ENCODE measurements at regions of chr1 and their contacts with region 1.

Region 1: GRCh38 chr1:152466217-152466616 is 44.4 kb upstream of the LCE5A start:
- DNase-seq: no peak
- H3K4me3 ChIP-seq: no peak overlapping the region
- H3K27ac ChIP-seq: no peak overlapping the region
- H3K4me1 ChIP-seq: no peaks in the 10 kb centered on the region
- H3K27me3 ChIP-seq: peaks cover 14% of the 10 kb centered on the region
- CTCF ChIP-seq: no peak

Region 2: DNA sequence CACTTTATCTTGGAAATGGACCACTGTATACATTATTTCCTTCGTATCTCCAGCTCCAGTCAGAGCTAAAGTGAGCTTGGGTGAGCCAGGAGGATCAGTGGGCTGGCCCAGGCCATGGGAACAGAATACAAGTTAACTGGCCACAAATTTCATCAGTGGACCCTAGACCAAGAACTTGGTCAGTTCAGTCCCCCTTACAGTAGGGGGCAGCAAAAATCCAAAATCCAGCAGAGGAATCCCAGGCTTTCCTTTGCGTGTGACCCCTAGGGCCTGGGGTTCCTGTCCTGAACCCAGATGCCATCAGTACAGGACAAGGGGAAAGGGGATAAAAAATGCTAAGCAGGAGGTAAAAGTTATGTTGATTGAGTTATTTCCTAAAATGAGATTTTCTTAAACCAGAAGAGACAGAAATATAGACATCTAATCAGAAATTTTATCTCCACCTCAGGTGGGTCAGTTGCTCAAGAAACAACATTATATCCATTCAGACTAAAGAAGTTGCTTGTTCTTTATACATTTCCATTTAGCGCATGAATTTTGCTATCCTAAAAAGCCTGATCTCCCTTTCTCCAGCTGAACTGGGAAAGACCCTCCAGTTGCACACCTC is 20.3 kb after region 1 on chr1:
- intact Hi-C with region 1: loop called (anchors 2 kb)
- DNase-seq: no peak
- H3K4me3 ChIP-seq: no peak overlapping the region
- H3K27ac ChIP-seq: no peak overlapping the region
- H3K4me1 ChIP-seq: no peaks in the 10 kb centered on the region
- H3K27me3 ChIP-seq: peaks cover 17% of the 10 kb centered on the region
- CTCF ChIP-seq: peak; percentile 24

Region 3: GRCh38 chr1:152623203-152623844 is 157.1 kb after region 1 on chr1:
- intact Hi-C with region 1: no loop called
- DNase-seq: no peak
- H3K4me3 ChIP-seq: no peak overlapping the region
- H3K27ac ChIP-seq: no peak overlapping the region
- H3K4me1 ChIP-seq: no peaks in the 10 kb centered on the region
- H3K27me3 ChIP-seq: peaks cover 27% of the 10 kb centered on the region
- CTCF ChIP-seq: no peak

Region 4: DNA sequence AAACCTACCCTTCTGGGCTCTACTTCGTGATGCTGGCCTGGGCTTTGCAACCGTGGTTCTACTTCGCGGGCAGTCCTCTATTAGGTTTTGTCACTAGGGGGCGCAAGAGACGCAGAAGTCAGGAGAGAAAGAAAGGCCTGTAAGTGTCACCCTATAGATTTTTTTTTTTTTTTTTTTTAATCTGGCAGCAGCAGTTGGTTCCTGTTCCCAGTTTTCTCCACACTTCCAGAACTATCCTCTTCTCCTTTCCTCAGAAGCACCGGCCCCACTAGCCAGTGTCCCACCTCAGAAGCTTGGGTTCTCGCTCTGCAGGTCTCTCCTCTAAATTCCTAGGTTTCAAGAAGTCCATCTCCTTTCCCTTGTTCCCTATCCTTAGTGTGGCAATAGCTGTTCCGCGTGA is 187.9 kb after region 1 on chr1:
- intact Hi-C with region 1: no loop called
- DNase-seq: no peak
- H3K4me3 ChIP-seq: no peak overlapping the region
- H3K27ac ChIP-seq: no peak overlapping the region
- H3K4me1 ChIP-seq: no peaks in the 10 kb centered on the region
- H3K27me3 ChIP-seq: peaks cover 1% of the 10 kb centered on the region
- CTCF ChIP-seq: peak; percentile 56

Region 5: DNA sequence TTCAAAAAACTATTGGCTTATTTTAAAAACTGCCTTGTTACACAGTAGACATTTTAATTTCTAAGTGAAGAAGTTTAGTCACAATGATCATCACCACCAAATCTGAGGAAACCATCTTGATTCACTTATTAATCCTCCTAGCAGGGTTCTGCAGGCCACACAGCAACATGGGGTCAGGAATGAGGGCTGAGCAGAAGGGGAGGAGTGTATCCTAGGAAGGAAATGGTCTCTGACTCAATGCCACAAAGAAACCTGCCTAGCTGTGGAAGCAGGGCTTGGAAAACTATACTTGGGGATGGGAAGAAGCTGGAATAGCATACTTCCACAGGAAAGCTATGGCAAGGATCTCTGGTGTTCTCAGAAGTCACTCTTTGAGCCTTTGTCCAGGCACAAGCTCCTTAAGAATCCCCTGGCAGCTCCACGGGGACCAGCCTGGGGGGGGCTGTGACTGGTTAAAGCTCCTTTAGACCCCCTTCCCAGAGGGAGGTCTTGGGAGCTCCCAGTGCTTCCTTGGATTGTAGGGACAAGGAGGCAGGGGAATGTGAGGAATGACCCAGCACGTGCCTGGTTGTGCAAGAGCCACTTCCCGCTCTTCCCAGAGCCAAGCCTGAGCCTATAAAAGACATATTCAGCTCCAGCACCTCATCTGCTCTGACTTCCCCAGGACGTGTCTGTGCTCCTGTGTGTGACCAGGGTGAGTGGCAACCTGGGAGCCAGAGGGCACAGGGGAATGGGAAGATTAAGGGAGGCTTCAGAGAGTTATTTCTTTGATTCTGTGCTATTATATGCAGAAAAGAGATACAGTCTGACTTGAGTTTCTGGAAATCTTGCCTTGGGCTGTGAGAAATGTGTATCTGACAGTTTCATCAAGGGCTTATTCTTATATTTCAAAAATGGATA is 231.7 kb after region 1 on chr1 and contains the start of gene LCE2A:
- intact Hi-C with region 1: no loop called
- DNase-seq: no peak
- H3K4me3 ChIP-seq: no peak within 1 kb of the TSS
- H3K27ac ChIP-seq: no peak within 1 kb of the TSS
- H3K4me1 ChIP-seq: no peaks in the 10 kb centered on the region
- H3K27me3 ChIP-seq: no peaks in the 10 kb centered on the region
- CTCF ChIP-seq: no peak
- total RNA-seq, gene LCE2A: not detected

Region 6: GRCh38 chr1:152866321-152866720 is 400.1 kb after region 1 on chr1:
- intact Hi-C with region 1: no loop called
- DNase-seq: no peak
- H3K4me3 ChIP-seq: no peak overlapping the region
- H3K27ac ChIP-seq: no peak overlapping the region
- H3K4me1 ChIP-seq: no peaks in the 10 kb centered on the region
- H3K27me3 ChIP-seq: peaks cover 10% of the 10 kb centered on the region
- CTCF ChIP-seq: no peak